Activated T-helper 1 cell treated with anti-CD3 and anti-CD28 coated beads, Interleukin-12 subunit alpha, Interleukin-12 subunit beta, Interleukin-2, Interleukin-4 antibody, amounts not matched to agents 30 ng/mL and 10 ng/mL and 1 ng/mL, durations not matched to agents 14 hours and 24 hours and 36 hours (primary cell): ENCODE measurements at regions of chr1 and their contacts with region 1.

Region 1: DNA sequence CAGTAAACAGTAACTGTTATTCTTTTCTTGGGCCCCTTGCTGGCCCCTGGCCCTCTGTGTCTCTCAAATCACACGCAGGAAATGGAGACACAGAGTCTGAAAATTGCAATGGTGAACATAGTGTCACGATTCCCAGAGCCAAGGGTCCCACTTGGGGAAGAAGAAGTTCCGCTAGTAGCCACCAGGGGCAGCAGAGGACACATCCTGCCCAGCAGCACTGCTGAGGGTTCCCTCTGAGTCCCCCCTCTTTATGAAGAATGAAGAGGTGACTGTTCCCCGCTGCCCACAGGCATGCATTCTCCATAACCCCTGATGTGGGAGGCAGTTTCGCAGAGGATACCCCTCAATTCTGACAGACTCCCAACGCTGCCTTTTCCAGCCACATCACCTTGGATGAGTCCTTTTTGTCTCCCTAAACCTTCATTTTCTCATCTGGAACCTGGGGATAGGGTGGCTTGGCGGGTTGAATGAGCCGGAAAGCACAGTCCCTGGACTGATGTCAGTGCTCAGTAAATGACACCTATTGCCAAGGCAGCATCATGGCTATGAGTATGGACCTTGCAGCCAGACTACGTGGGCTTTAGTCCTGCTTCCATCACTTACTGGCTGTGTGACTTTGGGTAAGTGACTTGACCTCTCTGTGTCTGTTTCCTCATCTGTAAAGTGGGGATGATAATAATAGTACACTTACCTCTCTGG is 238.0 kb upstream of the TMEM51 start:
- DNase-seq: peak; percentile 6
- H3K4me3 Mint-ChIP-seq: no peak overlapping the region
- H3K27ac Mint-ChIP-seq: no peak overlapping the region
- H3K4me1 Mint-ChIP-seq: no peaks in the 10 kb centered on the region
- H3K27me3 Mint-ChIP-seq: peaks cover 3% of the 10 kb centered on the region

Region 2: DNA sequence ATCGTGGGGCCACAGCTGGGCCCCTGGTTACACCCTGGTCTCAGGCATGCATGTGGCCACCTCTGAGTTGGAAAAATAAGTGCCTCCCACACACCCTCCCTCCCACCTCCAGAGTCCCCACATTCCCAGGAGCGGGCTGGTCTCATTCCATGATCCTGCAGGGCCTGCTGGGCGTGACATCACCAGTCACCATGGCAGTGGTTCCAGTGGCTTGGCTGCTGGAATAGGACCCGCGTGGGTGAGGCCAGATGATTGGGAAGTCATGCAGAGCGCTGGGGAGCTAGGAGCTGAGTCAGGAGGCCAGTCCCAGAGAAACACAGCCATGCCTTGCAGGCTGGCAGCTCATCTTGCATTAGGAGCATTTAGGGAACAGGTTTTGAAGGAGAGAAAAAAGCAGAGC is 112.6 kb after region 1 on chr1:
- intact Hi-C with region 1: loop called (anchors 1 kb)
- DNase-seq: no peak
- H3K4me3 Mint-ChIP-seq: no peak overlapping the region
- H3K27ac Mint-ChIP-seq: no peak overlapping the region
- H3K4me1 Mint-ChIP-seq: no peaks in the 10 kb centered on the region
- H3K27me3 Mint-ChIP-seq: no peaks in the 10 kb centered on the region